A549 (cell line): ENCODE measurements at regions of chr22 and their contacts with region 1.

Region 1: GRCh38 chr22:21938071-21938822 is 14.4 kb downstream of the PPM1F start:
- DNase-seq: peak; percentile 70 to 85
- ATAC-seq: peak; percentile 89 to 96
- H3K4me3 ChIP-seq: peak overlapping the region; percentile 77
- H3K27ac ChIP-seq: peak overlapping the region; percentile 98 to 100
- H3K4me1 ChIP-seq: peaks cover 27% of the 10 kb centered on the region
- CTCF ChIP-seq: peak; percentile 69
- EP300 ChIP-seq: no peak
- POLR2A ChIP-seq: peak; percentile 38
- RAD21 ChIP-seq: peak; percentile 61 to 76

Region 2: GRCh38 chr22:21710156-21710555 is 228.1 kb before region 1 on chr22:
- CTCF ChIA-PET with region 1: interaction called, 14 read pairs
- POLR2A ChIA-PET with region 1: no interaction called
- DNase-seq: no peak
- ATAC-seq: no peak
- H3K4me3 ChIP-seq: no peak overlapping the region
- H3K27ac ChIP-seq: no peak overlapping the region
- H3K4me1 ChIP-seq: no peaks in the 10 kb centered on the region; the same call in 2 of the 3 replicates
- CTCF ChIP-seq: no peak
- EP300 ChIP-seq: no peak
- POLR2A ChIP-seq: no peak
- RAD21 ChIP-seq: no peak

Region 3: GRCh38 chr22:21841422-21841821 is 96.8 kb before region 1 on chr22:
- CTCF ChIA-PET with region 1: interaction called, 11 read pairs
- POLR2A ChIA-PET with region 1: no interaction called
- DNase-seq: no peak
- ATAC-seq: no peak
- H3K4me3 ChIP-seq: no peak overlapping the region
- H3K27ac ChIP-seq: no peak overlapping the region
- H3K4me1 ChIP-seq: peaks cover 14% of the 10 kb centered on the region
- CTCF ChIP-seq: no peak
- EP300 ChIP-seq: no peak
- POLR2A ChIP-seq: no peak
- RAD21 ChIP-seq: no peak

Region 4: DNA sequence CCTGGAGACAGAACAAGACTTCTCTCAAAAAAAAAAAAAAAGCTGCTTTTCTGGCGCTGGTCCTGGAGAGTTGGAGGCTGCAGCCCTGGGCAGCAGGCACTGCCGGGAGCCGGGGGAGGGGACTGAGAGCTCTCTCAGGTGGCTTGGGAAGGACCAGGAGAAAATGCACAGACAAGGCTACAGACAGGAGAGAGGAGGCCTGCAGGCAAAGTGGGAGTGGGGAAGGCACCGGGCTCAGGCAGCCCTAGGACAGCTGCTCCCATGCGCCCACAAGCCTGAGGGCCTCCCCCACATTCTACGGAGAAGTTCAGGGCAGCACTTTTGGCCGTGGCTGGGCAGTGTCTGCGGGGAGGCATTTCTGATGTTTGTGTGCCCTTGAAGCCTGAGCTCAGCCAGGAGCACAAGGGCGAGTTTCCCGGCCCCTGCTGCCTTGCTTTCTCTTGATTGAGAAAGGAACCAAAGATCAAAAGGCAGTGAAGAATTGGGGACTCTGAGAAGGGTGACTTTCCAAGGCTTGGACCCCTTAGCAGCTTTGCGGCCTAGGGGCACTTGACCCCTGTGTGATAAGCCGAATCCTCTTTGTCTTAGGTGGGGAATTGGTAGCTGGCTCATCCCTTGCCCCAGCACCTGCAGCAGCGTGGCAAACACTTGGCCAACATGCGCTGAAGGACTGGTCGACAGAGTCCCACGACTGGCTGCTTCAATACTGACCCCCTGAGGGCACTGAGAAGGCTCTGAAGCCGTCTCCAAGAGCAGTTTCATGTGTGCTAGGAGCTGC is 20.9 kb before region 1 on chr22:
- CTCF ChIA-PET with region 1: interaction called, 31 read pairs
- POLR2A ChIA-PET with region 1: no interaction called
- DNase-seq: no peak
- ATAC-seq: no peak; a peak in 2 of 6 replicates
- H3K4me3 ChIP-seq: no peak overlapping the region
- H3K27ac ChIP-seq: no peak overlapping the region
- H3K4me1 ChIP-seq: no peaks in the 10 kb centered on the region
- CTCF ChIP-seq: no peak
- EP300 ChIP-seq: no peak
- POLR2A ChIP-seq: no peak
- RAD21 ChIP-seq: no peak

Region 5: DNA sequence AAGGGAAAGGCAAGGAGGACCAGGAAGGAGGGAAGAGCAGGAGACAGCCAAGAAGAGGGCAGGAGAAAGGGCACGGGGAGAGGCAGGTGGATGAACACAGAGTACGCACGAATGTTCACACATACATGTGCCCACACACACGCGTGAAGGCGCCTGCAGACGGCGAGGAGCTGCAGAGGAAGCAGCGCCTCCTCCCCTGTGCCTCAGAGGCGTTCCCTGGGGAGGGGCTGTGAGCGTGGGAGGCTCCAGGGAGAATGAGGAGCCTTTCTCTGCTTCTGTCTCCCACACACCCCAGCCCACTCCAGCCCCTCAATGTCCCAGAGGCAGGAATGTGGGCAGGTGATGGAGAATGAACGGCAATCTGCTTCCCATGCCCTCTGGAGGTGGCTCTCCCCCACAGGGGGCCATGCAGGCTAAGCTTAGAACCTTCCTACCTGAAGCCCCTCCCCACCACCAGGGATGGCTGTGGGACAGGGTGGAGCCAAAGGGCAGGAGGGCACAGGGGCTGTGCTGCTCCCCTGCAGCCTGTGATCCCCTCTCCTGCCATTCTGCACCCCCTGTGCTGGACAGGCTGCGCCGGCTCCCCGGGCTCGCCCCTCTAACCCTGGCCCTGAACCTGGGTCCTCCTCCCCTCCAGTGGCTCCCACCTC is 10.9 kb before region 1 on chr22:
- CTCF ChIA-PET with region 1: interaction called, 34 read pairs
- POLR2A ChIA-PET with region 1: no interaction called
- DNase-seq: no peak
- ATAC-seq: no peak
- H3K4me3 ChIP-seq: no peak overlapping the region
- H3K27ac ChIP-seq: no peak overlapping the region
- H3K4me1 ChIP-seq: no peaks in the 10 kb centered on the region
- CTCF ChIP-seq: no peak
- EP300 ChIP-seq: no peak
- POLR2A ChIP-seq: no peak
- RAD21 ChIP-seq: no peak

Region 6: GRCh38 chr22:21952586-21953571 is 14.6 kb after region 1 on chr22 and contains the start of gene PPM1F:
- CTCF ChIA-PET with region 1: interaction called, 65 read pairs
- POLR2A ChIA-PET with region 1: interaction called, 3 read pairs
- DNase-seq: peak; percentile 51 to 55
- ATAC-seq: peak; percentile 81 to 83
- H3K4me3 ChIP-seq: peak within 1 kb of the TSS; percentile 74
- H3K27ac ChIP-seq: peak within 1 kb of the TSS; percentile 85 to 91
- H3K4me1 ChIP-seq: 0 out of 3 replicates have a peak, but pooled peaks cover 4% of the 10 kb centered on the region
- CTCF ChIP-seq: peak; percentile 80
- EP300 ChIP-seq: no peak
- POLR2A ChIP-seq: peak; percentile 41
- RAD21 ChIP-seq: peak; percentile 39 to 54
- polyA plus RNA-seq, gene PPM1F: 9.4 and 11.0 TPM in 2 replicates